ENCODE measurements at regions of chr1 and their contacts with region 1.

Region 1: DNA sequence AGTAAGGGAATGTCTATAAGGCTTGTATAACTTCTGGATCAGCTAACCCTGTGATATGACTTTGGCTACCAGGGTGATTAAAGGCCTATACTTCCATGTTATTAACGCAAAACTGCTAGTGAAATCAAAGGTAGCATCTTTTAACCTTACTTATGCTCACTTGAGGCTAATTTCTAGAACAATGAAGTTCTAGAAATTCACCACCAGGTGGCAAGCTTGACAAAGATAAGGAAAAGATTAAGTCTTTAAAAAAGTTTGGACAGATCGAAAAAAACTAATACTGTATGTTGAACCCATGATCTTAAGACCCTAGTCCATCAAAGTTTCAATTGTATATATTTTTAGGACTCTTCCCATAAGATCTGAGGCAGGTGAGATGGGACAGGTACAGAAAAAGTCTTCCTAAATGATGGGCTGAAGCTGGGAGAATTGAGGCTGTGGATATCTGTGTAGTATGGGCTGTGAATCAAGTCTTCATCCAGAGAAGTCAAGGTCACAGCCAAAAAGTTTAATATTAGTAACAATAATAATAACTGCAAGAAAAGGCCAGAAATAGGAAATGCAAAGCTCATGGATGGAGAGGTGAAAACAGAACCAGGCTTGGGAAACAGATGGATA is 18.8 kb downstream of the KYAT3 start:
- DNase-seq: no peak
- CTCF ChIP-seq: peak; percentile 52

Region 2: GRCh38 chr1:88983791-88984559 is 10.3 kb after region 1 on chr1:
- CTCF ChIA-PET with region 1: interaction called, 67 read pairs
- POLR2A ChIA-PET with region 1: no interaction called
- DNase-seq: peak; percentile 31
- CTCF ChIP-seq: peak; percentile 12

Region 3: GRCh38 chr1:88990426-88990825 is 16.8 kb after region 1 on chr1:
- CTCF ChIA-PET with region 1: interaction called, 67 read pairs
- POLR2A ChIA-PET with region 1: no interaction called
- DNase-seq: no peak
- CTCF ChIP-seq: no peak

Measured in GM10248 (cell line).